A549 (cell line): ENCODE measurements at regions of chr7 and their contacts with region 1.

Region 1: DNA sequence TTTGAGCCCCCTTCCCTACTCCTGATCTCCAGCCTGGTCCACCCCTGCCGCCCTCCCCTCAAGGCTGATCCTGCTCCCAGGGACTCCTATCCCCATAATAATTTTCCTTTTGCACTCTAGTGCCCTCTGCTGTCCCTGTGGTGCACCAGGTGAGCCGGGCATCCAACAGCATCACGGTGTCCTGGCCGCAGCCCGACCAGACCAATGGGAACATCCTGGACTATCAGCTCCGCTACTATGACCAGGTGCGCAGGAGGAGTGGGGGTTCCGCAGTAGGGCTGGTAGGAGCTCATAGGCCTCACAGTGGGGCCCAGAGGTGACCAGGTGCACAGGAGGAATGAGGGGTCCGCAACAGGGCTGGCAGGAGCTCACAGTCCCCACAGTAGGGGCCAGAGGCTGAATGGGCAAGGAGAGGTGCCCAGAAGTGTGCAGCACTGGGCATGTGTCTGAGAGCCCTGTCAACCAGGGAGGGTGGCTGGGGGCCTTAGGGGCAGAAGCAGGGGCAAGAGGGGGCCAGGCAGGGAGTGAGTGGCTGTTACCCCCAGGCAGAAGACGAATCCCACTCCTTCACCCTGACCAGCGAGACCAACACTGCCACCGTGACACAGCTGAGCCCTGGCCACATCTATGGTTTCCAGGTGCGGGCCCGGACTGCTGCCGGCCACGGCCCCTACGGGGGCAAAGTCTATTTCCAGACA is 11.6 kb downstream of the EPHB6 start:
- DNase-seq: peak; percentile 32 to 67
- ATAC-seq: peak; percentile 82 to 93
- H3K4me3 ChIP-seq: no peak overlapping the region
- H3K27ac ChIP-seq: no peak overlapping the region
- H3K4me1 ChIP-seq: no peaks in the 10 kb centered on the region
- CTCF ChIP-seq: peak; percentile 49
- EP300 ChIP-seq: no peak
- POLR2A ChIP-seq: no peak
- RAD21 ChIP-seq: peak; percentile 27 to 47; a peak in 3 of 5 replicates

Region 2: DNA sequence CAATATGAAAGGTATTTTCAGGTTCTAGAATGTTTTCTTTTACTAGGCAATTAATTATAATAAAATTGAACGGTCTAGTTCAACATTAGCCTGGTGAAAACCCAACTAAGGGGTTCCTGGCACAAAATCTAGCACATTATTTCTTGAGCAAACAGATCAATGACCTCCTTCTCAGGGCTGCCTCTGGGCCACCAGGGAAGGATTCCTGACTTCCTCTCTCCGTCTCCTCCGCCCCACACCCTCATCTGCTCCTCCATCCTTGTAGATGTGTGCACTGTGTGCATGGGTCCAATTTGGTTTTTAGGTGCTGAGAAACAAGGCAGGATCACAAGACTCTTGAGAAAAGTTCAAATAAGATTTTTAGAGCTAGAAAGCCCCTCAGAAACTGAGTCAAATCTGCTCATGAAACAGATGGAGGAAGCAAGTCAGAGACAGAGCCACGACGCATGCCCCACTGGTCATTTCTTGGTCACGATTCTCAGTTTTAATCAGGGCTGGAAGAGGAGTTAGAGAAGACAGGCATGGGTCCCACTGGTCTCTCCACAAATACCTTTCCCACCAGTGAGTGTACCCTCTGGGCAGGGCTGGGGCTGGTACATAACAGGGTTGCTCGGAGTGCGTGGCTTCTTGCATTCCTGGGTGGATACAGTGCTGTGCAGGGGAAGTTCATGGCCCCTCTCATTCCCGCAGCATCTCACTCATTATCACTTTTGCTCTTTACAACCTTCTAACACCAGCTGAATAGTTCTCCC is 15.3 kb after region 1 on chr7:
- CTCF ChIA-PET with region 1: interaction called, 12 read pairs
- POLR2A ChIA-PET with region 1: no interaction called
- DNase-seq: no peak
- ATAC-seq: no peak
- H3K4me3 ChIP-seq: no peak overlapping the region
- H3K27ac ChIP-seq: no peak overlapping the region
- H3K4me1 ChIP-seq: no peaks in the 10 kb centered on the region
- CTCF ChIP-seq: no peak
- EP300 ChIP-seq: no peak
- POLR2A ChIP-seq: no peak
- RAD21 ChIP-seq: no peak